SK-N-SH (cell line): ENCODE measurements at regions of chr11 and their contacts with region 1.

Region 1: DNA sequence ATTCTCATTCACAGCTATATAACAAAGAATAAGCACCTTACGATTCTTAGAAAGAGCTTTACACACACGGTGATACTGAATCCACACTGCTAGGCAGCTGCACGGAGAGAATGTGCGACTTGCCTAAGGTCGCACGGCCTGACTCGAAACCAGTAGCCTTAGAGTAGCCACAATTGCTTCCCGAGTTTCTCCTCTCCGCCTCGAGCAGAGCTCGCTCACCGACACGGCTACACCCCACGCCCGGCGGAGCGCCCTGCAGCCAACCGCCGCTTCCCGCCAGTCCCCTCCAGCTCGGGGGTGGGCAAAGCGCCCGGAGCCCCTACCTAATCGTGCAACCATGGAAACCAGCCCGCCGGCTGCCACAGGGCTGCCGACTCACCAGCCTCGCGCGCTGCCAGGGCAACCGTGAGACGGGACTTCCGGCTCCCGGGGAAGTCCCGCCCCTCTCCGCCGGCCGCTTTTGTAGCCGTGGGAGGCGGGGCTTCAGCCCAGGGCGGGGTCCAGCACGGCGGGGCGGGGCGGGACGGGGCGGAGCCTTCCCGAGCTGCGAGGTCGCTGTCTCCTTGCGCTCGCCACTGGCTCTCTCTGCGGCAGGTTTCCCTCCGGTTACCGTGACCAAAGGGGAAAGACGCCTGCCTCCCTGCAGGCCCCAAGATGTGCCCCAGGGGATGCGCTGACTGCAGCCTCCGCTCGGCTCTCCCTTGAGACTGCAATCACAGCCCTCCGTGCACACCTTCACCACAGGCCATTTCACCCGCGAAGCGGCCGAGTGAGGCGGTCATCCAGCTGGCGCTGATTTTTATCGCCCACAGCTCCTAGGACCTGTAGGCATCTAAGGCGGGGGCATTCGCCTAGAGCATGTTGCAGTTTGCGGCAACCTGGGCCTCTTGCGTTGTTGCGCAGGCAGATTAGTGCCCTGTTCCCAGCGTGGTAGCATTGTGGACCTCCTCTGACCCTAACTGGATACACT is 1.1 kb downstream of the BSCL2 start:
- DNase-seq: peak; percentile 97
- H3K4me3 ChIP-seq: peak overlapping the region; percentile 67 to 70
- H3K27ac ChIP-seq: peak overlapping the region; percentile 84 to 93
- H3K4me1 ChIP-seq: peaks cover 22 to 45% of the 10 kb centered on the region in 2 experiments; a peak in 3 of 4 replicates
- H3K27me3 ChIP-seq: no peaks in the 10 kb centered on the region
- CTCF ChIP-seq: no peak
- EP300 ChIP-seq: no peak
- RAD21 ChIP-seq: no peak

Region 2: GRCh38 chr11:62694455-62695167 is 11.6 kb before region 1 on chr11:
- CTCF ChIA-PET with region 1: interaction called, 48 read pairs
- POLR2A ChIA-PET with region 1: interaction called, 4 read pairs
- DNase-seq: peak; percentile 81
- H3K4me3 ChIP-seq: peak overlapping the region in 1 of 2 experiments; percentile 31; a peak in 1 of 4 replicates
- H3K27ac ChIP-seq: peak overlapping the region; percentile 23 to 27; a peak in 2 of 4 replicates
- H3K4me1 ChIP-seq: peaks cover 3 to 4% of the 10 kb centered on the region in 2 experiments; a peak in 3 of 4 replicates
- H3K27me3 ChIP-seq: no peaks in the 10 kb centered on the region
- CTCF ChIP-seq: peak; percentile 87
- EP300 ChIP-seq: no peak
- RAD21 ChIP-seq: peak; percentile 68

Region 3: DNA sequence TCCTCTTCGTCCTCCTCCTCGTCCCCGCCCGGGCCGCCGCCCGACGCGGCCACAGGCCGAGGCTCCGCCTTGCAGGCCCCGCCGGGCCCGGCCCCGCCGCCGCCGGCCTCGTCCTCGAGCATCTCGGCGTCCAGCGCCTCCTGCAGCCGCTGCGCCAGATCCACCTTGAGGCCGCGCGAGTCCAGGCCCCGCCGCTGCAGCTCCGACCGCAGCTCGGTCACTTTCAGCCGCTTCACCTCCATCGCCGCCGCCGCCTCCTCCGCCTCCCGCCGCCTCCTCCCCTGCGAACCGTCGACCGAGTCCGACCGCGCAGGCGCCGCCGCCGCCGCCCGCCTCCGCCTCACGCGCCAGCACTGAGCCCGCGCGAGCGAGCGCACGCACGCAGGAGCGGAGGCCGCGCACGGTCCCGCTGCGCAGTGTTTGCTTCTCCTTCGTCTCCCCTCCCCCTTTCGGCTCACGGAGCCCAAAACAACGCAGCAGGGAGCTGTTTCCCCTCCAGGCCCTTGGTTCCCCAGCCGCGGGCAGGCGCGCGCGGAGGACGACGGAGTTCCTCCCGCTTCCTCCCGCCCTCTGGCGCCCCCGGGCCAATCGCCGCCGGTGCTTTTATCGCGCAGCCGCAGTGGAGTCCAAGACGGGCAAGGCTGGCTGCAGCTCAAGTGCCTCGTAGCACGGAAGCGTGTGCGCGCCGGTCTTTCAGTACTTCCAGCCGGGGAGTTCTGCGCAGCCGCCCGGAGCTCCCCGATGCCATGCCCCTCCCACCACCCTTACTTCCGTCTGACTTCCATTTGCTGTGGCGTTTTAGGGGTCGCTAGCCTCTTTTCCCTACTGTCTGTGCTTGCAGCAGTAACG is 21.0 kb after region 1 on chr11 and contains the start of gene HNRNPUL2:
- CTCF ChIA-PET with region 1: interaction called, 5 read pairs
- POLR2A ChIA-PET with region 1: interaction called, 24 read pairs
- DNase-seq: peak; percentile 95
- H3K4me3 ChIP-seq: peak within 1 kb of the TSS; percentile 89 to 92
- H3K27ac ChIP-seq: peak within 1 kb of the TSS; percentile 99
- H3K4me1 ChIP-seq: peaks cover 12 to 21% of the 10 kb centered on the region in 2 experiments; a peak in 3 of 4 replicates
- H3K27me3 ChIP-seq: no peaks in the 10 kb centered on the region
- CTCF ChIP-seq: no peak; the same call in 1 of the 2 replicates
- EP300 ChIP-seq: no peak
- RAD21 ChIP-seq: no peak
- polyA plus RNA-seq, gene HNRNPUL2: 31.0 and 33.5 TPM in 2 replicates

Region 4: DNA sequence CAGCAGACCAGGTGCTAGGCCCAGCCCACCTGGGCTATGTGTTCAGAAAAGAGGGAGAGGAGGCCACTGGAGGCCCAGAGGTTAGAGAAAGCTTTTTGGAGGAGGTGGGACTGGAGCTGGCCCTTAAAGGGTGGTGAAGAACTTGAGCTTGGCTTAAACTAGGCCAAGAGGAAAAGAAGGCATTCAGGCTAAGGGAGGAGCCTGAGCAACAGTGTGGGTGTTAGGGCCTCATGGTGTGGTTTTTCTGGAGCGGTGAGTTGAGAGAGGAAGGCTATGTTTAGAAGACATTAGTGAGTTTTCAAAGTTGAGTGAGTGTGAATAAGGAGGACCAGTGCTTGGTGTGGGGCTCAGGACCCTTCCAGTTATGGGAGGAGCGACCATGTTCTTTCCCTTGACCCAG is 71.2 kb after region 1 on chr11:
- CTCF ChIA-PET with region 1: no interaction called
- POLR2A ChIA-PET with region 1: no interaction called
- DNase-seq: no peak
- H3K4me3 ChIP-seq: no peak overlapping the region
- H3K27ac ChIP-seq: no peak overlapping the region
- H3K4me1 ChIP-seq: no peaks in the 10 kb centered on the region
- H3K27me3 ChIP-seq: no peaks in the 10 kb centered on the region
- CTCF ChIP-seq: no peak
- EP300 ChIP-seq: no peak
- RAD21 ChIP-seq: no peak